BJ (cell line): ENCODE measurements at regions of chr7 and their contacts with region 1.

Region 1: GRCh38 chr7:33932832-33933468 is 27.6 kb downstream of the BMPER start:
- DNase-seq: peak; percentile 52
- H3K4me3 ChIP-seq: no peak overlapping the region
- H3K27me3 ChIP-seq: no peaks in the 10 kb centered on the region
- CTCF ChIP-seq: peak; percentile 98

Region 2: DNA sequence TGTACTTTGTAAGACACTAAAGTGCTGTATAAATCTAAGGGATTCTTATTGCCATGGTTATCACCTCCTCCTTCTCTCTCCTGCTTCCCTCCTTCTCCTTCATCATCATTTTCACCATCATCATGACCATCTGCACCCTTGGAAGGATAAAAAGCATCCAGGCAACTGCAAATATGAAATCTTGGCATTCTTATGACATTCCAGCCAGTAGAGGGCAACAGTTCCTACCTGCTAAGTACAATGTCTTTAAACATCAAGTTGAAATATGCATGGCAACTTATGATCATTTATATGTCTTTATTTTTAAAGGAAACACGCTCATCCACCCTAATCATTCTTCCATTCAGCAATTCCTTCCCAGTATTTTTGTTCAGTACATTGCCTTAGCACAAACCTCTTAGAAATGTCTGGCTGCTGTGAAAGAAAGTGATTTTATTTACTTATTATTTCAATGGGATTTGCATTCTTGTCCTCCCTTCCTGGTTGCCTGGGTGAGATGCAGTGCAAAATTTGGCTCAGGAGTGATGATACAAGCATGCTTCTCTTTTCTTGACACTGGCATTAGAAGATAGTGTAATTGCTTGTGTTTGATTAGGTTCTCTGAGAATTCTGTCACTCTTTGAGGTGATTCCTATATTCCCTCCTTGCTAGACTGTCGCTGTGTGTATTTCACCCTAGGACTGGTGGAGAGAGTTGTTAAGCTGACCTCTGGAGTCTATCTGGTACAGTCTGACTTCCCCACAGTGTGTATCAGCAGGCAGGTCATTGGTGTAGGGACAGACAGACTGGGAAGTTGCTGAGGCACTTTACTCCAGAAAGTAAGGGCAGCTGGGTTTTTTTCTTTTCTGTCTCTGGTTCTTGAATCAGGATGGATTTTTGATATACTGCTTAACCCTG is 216.1 kb before region 1 on chr7:
- CTCF ChIA-PET with region 1: interaction called, 3 read pairs
- POLR2A ChIA-PET with region 1: interaction called, 10 read pairs
- DNase-seq: no peak
- H3K4me3 ChIP-seq: no peak overlapping the region
- H3K27me3 ChIP-seq: no peaks in the 10 kb centered on the region
- CTCF ChIP-seq: peak; percentile 63

Region 3: GRCh38 chr7:33921216-33921938 is 11.6 kb before region 1 on chr7:
- CTCF ChIA-PET with region 1: interaction called, 28 read pairs
- POLR2A ChIA-PET with region 1: no interaction called
- DNase-seq: no peak
- H3K4me3 ChIP-seq: no peak overlapping the region
- H3K27me3 ChIP-seq: no peaks in the 10 kb centered on the region
- CTCF ChIP-seq: no peak

Region 4: GRCh38 chr7:33982425-33982786 is 49.5 kb after region 1 on chr7:
- CTCF ChIA-PET with region 1: interaction called, 31 read pairs
- POLR2A ChIA-PET with region 1: no interaction called
- DNase-seq: no peak
- H3K4me3 ChIP-seq: no peak overlapping the region
- H3K27me3 ChIP-seq: no peaks in the 10 kb centered on the region
- CTCF ChIP-seq: peak; percentile 70